Posterior vena cava (tissue), 2 donors: ENCODE measurements at regions of chr5 and their contacts with region 1.

Region 1: GRCh38 chr5:178288381-178289368 is 56.1 kb upstream of the PHYKPL start:
- DNase-seq: no peak

Region 2: GRCh38 chr5:178404987-178405386 is 116.3 kb after region 1 on chr5:
- intact Hi-C with region 1: no loop called
- DNase-seq: peak; percentile 46

Region 3: DNA sequence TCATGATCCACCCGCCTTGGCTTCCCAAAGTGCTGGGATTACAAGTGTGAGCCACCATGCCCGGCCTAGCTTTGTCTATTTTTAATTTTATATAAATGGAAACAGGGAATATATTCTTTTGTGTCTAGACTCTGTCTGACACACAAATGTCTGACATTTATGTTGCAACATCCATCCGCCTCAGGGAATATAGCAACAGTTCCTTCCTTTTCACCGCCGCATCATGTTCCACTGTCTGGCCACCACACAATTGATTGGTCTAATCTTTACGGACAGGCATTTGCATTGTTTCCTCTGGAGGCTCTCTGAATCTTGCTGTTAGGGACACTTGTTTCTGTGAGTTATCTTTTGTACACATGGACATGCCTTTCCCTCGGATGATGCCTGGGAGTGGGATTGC is 1639.1 kb after region 1 on chr5:
- intact Hi-C with region 1: loop called in 1 of 2 experiments (anchors 5 kb)
- DNase-seq: no peak